ENCODE measurements at regions of chr1 and their contacts with region 1.

Region 1: GRCh38 chr1:32964461-32965250 is at the start of gene RNF19B:
- H3K4me3 ChIP-seq: peak within 1 kb of the TSS; percentile 62
- H3K27ac ChIP-seq: peak within 1 kb of the TSS; percentile 84
- H3K4me1 ChIP-seq: peaks cover 10% of the 10 kb centered on the region
- CTCF ChIP-seq: no peak

Region 2: GRCh38 chr1:32953495-32953894 is 11.2 kb before region 1 on chr1:
- CTCF ChIA-PET with region 1: no interaction called
- POLR2A ChIA-PET with region 1: interaction called, 17 read pairs
- H3K4me3 ChIP-seq: no peak overlapping the region
- H3K27ac ChIP-seq: no peak overlapping the region
- H3K4me1 ChIP-seq: peaks cover 8% of the 10 kb centered on the region; the same call in 1 of the 2 replicates
- CTCF ChIP-seq: no peak

Region 3: DNA sequence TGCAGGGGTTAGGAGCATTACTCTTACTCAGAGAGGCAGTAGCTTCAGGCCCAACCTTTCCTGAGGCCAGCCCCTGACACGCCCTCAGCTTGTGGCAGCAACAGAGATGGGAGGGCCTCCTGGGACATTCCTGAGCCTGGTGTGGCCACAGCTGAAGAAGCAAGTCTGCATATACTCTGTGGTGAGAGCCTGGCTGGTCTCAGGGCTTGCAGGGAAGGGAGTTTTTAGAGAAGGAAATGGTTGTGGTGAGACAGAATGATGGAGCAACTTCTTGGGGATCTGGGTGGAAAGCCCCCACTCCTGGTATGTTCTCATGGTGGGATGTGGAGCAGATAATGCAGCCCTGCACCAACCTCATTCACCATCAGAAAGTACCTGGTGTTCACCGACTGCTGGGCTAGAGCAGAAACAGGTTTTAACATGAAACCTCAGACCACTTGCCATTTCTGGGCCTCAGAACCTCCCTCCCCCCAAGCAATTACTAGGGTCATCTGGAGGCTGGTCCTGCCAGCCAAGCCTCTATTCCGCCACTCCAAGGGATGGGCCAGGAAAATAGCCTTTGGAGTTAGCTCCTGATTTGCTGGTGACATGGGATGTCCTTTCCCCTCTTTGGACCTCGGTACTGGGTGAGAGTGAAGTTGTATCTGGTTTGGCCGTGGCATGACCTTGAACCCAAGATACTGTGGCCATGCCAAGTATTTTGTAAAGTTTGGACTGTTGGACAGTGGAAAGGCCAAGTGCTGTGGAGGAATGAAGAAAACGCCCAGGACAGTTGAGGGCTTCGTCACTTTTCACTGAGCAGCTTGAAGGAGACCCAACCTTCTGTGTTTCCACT is 28.1 kb after region 1 on chr1:
- CTCF ChIA-PET with region 1: no interaction called
- POLR2A ChIA-PET with region 1: interaction called, 21 read pairs
- H3K4me3 ChIP-seq: no peak overlapping the region
- H3K27ac ChIP-seq: no peak overlapping the region
- H3K4me1 ChIP-seq: no peaks in the 10 kb centered on the region; the same call in 1 of the 2 replicates
- CTCF ChIP-seq: no peak

Region 4: DNA sequence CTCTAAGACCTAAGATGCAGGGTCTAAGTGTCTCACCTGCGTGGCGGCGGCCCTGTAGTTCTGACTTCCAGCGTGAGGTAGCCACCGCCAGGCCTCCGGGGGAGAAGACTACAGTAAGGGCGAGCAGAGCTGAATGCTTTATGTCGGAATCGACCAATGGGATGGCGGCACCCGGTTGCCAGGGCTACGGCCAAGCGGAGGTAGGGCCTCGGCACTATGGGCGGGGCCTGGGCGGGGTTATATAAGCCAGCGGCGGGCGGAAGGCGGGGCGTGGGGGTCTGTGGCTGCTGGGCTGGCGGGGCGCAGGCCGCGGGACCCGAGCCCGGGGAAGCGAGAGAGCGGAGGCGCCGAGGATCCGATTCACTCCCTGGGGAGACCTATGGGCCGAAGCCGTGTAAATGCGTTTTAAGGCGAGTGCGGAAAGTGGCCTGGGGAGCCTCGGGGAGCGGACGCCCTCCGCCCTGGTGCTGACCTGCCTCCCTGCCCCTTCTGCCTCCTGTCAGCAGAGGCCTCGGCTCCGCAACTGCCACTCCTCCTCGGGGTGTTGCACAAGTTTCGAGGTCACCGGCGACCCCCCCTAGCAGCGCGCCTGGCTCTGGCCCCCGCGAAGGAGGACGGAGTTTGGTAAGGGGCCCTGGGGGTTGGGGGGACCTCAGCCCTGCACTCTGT is 116.4 kb after region 1 on chr1 and contains the start of gene AZIN2:
- CTCF ChIA-PET with region 1: interaction called, 3 read pairs
- POLR2A ChIA-PET with region 1: interaction called, 10 read pairs
- H3K4me3 ChIP-seq: peak within 1 kb of the TSS; percentile 69
- H3K27ac ChIP-seq: no peak within 1 kb of the TSS; the same call in 1 of the 2 replicates
- H3K4me1 ChIP-seq: no peaks in the 10 kb centered on the region
- CTCF ChIP-seq: no peak

Measured in HEK293 (cell line).